Lower leg skin (tissue), 4 donors: ENCODE measurements at regions of chr9 and their contacts with region 1.

Region 1: DNA sequence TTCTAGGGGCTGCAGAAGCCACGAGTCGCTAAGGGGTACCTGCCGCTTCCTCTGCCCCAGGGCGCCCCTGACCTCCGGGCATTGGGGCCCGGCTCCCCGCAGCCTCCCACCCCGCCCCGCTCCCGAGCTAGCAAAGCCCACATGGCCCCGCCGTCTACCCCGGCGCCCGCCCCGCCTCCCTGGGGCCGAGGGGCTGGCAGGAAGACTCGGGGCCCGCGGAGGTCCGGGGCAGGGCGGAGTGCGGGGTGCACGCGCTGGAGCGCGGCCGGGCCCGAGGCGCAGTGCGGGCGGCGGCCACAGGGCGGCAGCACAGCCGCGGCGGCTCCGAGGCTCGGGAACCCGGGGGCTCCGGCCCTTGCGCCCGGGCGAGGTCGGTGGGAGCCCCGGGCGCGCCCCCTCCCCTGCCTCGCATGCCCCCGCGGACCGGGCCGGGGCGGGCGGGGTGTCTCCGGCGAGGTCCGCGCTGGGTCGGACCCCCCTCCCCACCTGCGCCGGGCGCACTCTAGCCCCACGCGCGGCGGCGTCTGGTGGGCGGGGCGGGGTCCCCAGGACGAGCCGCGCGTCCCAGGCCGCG is 6.7 kb downstream of the NRARP start:
- DNase-seq: no peak
- H3K4me3 ChIP-seq: no peak overlapping the region
- CTCF ChIP-seq: no peak
- POLR2A ChIP-seq: no peak

Region 2: GRCh38 chr9:137353223-137354152 is 58.2 kb after region 1 on chr9:
- intact Hi-C with region 1: no loop called
- DNase-seq: peak in 1 of 2 donors; percentile 26
- H3K4me3 ChIP-seq: no peak overlapping the region
- CTCF ChIP-seq: no peak
- POLR2A ChIP-seq: no peak

Region 3: GRCh38 chr9:137406876-137407589 is 111.7 kb after region 1 on chr9:
- intact Hi-C with region 1: loop called (anchors 5 kb)
- DNase-seq: peak in 1 of 2 donors; percentile 91
- H3K4me3 ChIP-seq: no peak overlapping the region
- CTCF ChIP-seq: no peak
- POLR2A ChIP-seq: no peak